ENCODE measurements at regions of chr22 and their contacts with region 1.

Region 1: GRCh38 chr22:29553351-29554224 is at the start of gene THOC5:
- DNase-seq: peak; percentile 80 to 93 (median 86)
- ATAC-seq: peak; percentile 93
- H3K4me3 ChIP-seq: peak within 1 kb of the TSS; percentile 83
- H3K4me3 Mint-ChIP-seq: peak within 1 kb of the TSS; percentile 95
- H3K27ac ChIP-seq: peak within 1 kb of the TSS; percentile 54 to 84
- H3K27ac Mint-ChIP-seq: peak within 1 kb of the TSS; percentile 94
- H3K4me1 ChIP-seq: peaks cover 22% of the 10 kb centered on the region
- H3K4me1 Mint-ChIP-seq: peaks cover 15% of the 10 kb centered on the region
- H3K27me3 ChIP-seq: no peaks in the 10 kb centered on the region
- H3K27me3 Mint-ChIP-seq: no peaks in the 10 kb centered on the region
- CTCF ChIP-seq: no peak
- total RNA-seq, gene THOC5: 27.1 to 32.9 TPM

Region 2: GRCh38 chr22:29457730-29458129 is 95.9 kb before region 1 on chr22:
- CTCF ChIA-PET with region 1: no interaction called
- POLR2A ChIA-PET with region 1: no interaction called
- intact Hi-C with region 1: no loop called
- DNase-seq: peak in 3 of 14 experiments; percentile 26 to 38 (median 32)
- ATAC-seq: peak; percentile 57
- H3K4me3 ChIP-seq: no peak overlapping the region
- H3K4me3 Mint-ChIP-seq: no peak overlapping the region
- H3K27ac ChIP-seq: no peak overlapping the region
- H3K27ac Mint-ChIP-seq: no peak overlapping the region
- H3K4me1 ChIP-seq: no peaks in the 10 kb centered on the region
- H3K4me1 Mint-ChIP-seq: no peaks in the 10 kb centered on the region
- H3K27me3 ChIP-seq: no peaks in the 10 kb centered on the region
- H3K27me3 Mint-ChIP-seq: no peaks in the 10 kb centered on the region
- CTCF ChIP-seq: no peak

Region 3: DNA sequence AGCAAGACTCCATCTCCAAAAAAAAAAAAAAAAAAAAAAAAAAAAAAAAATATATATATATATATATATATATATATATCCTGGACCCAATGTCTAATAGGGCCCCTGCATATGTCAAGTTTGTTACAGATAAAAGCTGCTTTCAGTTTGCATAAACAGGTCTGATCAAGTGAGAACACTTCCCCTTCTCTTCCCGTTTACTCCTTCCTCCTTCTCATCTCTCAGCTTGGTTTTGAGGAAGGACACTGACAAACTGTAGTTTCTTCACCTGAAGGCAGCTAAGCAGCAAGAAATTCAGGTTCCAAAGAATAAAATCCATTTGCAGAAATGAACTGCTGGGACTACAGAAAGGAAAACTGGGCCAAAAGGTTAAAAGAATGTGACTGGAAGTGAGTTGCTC is 11.7 kb before region 1 on chr22:
- CTCF ChIA-PET with region 1: no interaction called
- POLR2A ChIA-PET with region 1: interaction called, 14 read pairs
- intact Hi-C with region 1: no loop called
- DNase-seq: no peak
- ATAC-seq: no peak
- H3K4me3 ChIP-seq: no peak overlapping the region
- H3K4me3 Mint-ChIP-seq: no peak overlapping the region
- H3K27ac ChIP-seq: no peak overlapping the region
- H3K27ac Mint-ChIP-seq: no peak overlapping the region
- H3K4me1 ChIP-seq: no peaks in the 10 kb centered on the region
- H3K4me1 Mint-ChIP-seq: no peaks in the 10 kb centered on the region
- H3K27me3 ChIP-seq: no peaks in the 10 kb centered on the region
- H3K27me3 Mint-ChIP-seq: no peaks in the 10 kb centered on the region
- CTCF ChIP-seq: no peak

Region 4: GRCh38 chr22:29580200-29580810 is 26.7 kb after region 1 on chr22:
- CTCF ChIA-PET with region 1: no interaction called
- POLR2A ChIA-PET with region 1: interaction called, 17 read pairs
- intact Hi-C with region 1: loop called in 1 of 2 experiments (anchors 2 kb)
- DNase-seq: peak in 2 of 14 experiments; percentile 17 to 33
- ATAC-seq: no peak
- H3K4me3 ChIP-seq: peak overlapping the region; percentile 70
- H3K4me3 Mint-ChIP-seq: peak overlapping the region; percentile 95
- H3K27ac ChIP-seq: peak overlapping the region; percentile 34 to 46
- H3K27ac Mint-ChIP-seq: peak overlapping the region; percentile 86
- H3K4me1 ChIP-seq: peaks cover 19% of the 10 kb centered on the region
- H3K4me1 Mint-ChIP-seq: peaks cover 18% of the 10 kb centered on the region
- H3K27me3 ChIP-seq: no peaks in the 10 kb centered on the region
- H3K27me3 Mint-ChIP-seq: no peaks in the 10 kb centered on the region
- CTCF ChIP-seq: no peak

Region 5: DNA sequence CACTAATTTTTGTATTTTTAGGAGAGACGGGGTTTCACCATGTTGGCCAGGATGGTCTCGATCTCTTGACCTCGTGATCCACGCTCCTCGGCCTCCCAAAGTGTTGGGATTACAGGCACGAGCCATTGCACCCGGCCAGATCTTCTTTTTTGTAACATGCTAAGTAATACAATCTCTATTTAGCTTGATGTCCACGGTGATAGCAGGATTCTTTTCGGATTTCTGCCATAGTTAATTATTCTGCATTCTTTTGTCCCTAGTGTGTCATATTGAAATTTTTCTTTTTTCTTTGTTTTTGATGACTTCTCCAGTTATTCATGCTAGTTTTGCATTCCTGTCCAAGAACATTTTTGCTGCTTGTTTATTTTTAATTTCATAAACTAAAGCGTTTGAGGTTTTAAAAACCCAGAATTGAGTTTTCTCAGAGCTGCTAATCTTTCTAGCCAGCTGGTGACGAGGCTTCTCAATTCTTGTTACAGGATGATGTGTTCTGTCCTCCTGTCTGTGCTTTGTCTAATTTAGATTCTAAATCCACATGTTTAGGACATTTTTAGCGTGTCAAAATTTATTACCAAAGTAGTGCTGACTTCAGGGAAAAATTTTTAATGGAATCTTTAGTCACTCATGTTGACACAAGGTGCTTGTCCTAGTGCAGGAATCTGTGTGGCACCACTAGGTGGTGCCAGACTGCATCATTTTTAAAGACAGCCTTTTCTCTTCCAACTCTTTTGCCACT is 71.7 kb after region 1 on chr22:
- CTCF ChIA-PET with region 1: interaction called, 6 read pairs
- POLR2A ChIA-PET with region 1: interaction called, 17 read pairs
- intact Hi-C with region 1: no loop called
- DNase-seq: peak in 8 of 14 experiments; percentile 9 to 73 (median 40)
- ATAC-seq: peak; percentile 51
- H3K4me3 ChIP-seq: no peak overlapping the region
- H3K4me3 Mint-ChIP-seq: no peak overlapping the region
- H3K27ac ChIP-seq: no peak overlapping the region
- H3K27ac Mint-ChIP-seq: peak overlapping the region; percentile 81
- H3K4me1 ChIP-seq: peaks cover 28% of the 10 kb centered on the region
- H3K4me1 Mint-ChIP-seq: peaks cover 76% of the 10 kb centered on the region
- H3K27me3 ChIP-seq: no peaks in the 10 kb centered on the region
- H3K27me3 Mint-ChIP-seq: no peaks in the 10 kb centered on the region
- CTCF ChIP-seq: peak; percentile 93

Measured in CD4-positive, alpha-beta T cell (primary cell).